MCF 10A (cell line): ENCODE measurements at regions of chr3 and their contacts with region 1.

Region 1: GRCh38 chr3:88621589-88621988 is 471.8 kb downstream of the C3orf38 start:
- DNase-seq: no peak
- H3K4me3 Mint-ChIP-seq: no peak overlapping the region
- H3K27ac Mint-ChIP-seq: no peak overlapping the region
- H3K4me1 Mint-ChIP-seq: no peaks in the 10 kb centered on the region
- H3K27me3 Mint-ChIP-seq: no peaks in the 10 kb centered on the region
- CTCF ChIP-seq: no peak

Region 2: GRCh38 chr3:88677298-88677697 is 55.7 kb after region 1 on chr3:
- CTCF ChIA-PET with region 1: no interaction called
- POLR2A ChIA-PET with region 1: no interaction called
- intact Hi-C with region 1: no loop called
- DNase-seq: no peak
- H3K4me3 Mint-ChIP-seq: no peak overlapping the region
- H3K27ac Mint-ChIP-seq: no peak overlapping the region
- H3K4me1 Mint-ChIP-seq: no peaks in the 10 kb centered on the region
- H3K27me3 Mint-ChIP-seq: no peaks in the 10 kb centered on the region
- CTCF ChIP-seq: no peak

Region 3: GRCh38 chr3:89098964-89099585 is 477.5 kb after region 1 on chr3:
- CTCF ChIA-PET with region 1: no interaction called
- POLR2A ChIA-PET with region 1: no interaction called
- intact Hi-C with region 1: loop called (anchors 2 kb)
- DNase-seq: peak; percentile 60
- H3K4me3 Mint-ChIP-seq: no peak overlapping the region
- H3K27ac Mint-ChIP-seq: no peak overlapping the region
- H3K4me1 Mint-ChIP-seq: peaks cover 7% of the 10 kb centered on the region
- H3K27me3 Mint-ChIP-seq: no peaks in the 10 kb centered on the region
- CTCF ChIP-seq: peak; percentile 90